HCT116 (cell line): ENCODE measurements at regions of chr10 and their contacts with region 1.

Region 1: GRCh38 chr10:99395750-99396445 is 34.5 kb downstream of the GOT1 start:
- DNase-seq: no peak
- ATAC-seq: peak; percentile 41; the same call in 1 of the 2 replicates
- H3K4me3 ChIP-seq: no peak overlapping the region
- H3K27ac ChIP-seq: peak overlapping the region; percentile 26; the same call in 1 of the 2 replicates
- H3K4me1 ChIP-seq: peaks cover 15 to 31% of the 10 kb centered on the region in 2 experiments; a peak in 3 of 4 replicates
- H3K27me3 ChIP-seq: no peaks in the 10 kb centered on the region
- CTCF ChIP-seq: no peak
- POLR2A ChIP-seq: no peak
- RAD21 ChIP-seq: no peak

Region 2: DNA sequence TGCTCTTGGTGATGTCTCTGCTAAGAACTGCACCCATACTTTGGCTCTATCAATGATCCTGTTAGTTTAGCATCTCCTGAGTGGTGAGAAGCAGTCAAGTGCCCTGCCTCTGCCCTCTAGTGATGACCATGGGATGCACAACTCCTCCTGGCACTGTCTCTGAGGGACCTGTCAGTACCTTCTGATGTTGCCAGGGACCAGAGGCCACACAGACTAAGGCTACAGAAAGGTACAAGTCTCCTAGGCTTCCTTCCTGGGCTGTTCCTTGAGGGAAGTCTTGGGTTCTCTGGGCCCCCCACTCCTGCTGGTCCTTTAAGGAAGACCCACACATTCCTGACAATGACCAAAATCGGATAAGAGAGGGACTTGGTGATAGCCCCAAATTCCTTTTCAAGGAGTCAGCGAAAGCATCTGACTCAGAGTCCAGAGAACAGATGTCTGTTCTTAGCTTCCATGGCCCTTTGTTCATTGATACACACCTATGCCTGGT is 152.2 kb after region 1 on chr10:
- CTCF ChIA-PET with region 1: interaction called, 4 read pairs
- POLR2A ChIA-PET with region 1: no interaction called
- RAD21 ChIA-PET with region 1: no interaction called
- intact Hi-C with region 1: loop called (anchors 1 kb)
- DNase-seq: peak; percentile 50
- ATAC-seq: peak; percentile 98
- H3K4me3 ChIP-seq: no peak overlapping the region
- H3K27ac ChIP-seq: no peak overlapping the region
- H3K4me1 ChIP-seq: peaks cover 0 to 10% of the 10 kb centered on the region in 2 experiments; a peak in 1 of 4 replicates
- H3K27me3 ChIP-seq: peaks cover 26% of the 10 kb centered on the region; the same call in 1 of the 2 replicates
- CTCF ChIP-seq: peak; percentile 71 to 84 (median 81)
- POLR2A ChIP-seq: no peak
- RAD21 ChIP-seq: peak; percentile 71

Region 3: GRCh38 chr10:99595770-99596465 is 200.0 kb after region 1 on chr10:
- CTCF ChIA-PET with region 1: no interaction called
- POLR2A ChIA-PET with region 1: no interaction called
- RAD21 ChIA-PET with region 1: no interaction called
- intact Hi-C with region 1: loop called (anchors 5 kb)
- DNase-seq: no peak
- ATAC-seq: peak; percentile 71
- H3K4me3 ChIP-seq: no peak overlapping the region
- H3K27ac ChIP-seq: no peak overlapping the region
- H3K4me1 ChIP-seq: peaks cover 21 to 39% of the 10 kb centered on the region in 2 experiments
- H3K27me3 ChIP-seq: no peaks in the 10 kb centered on the region
- CTCF ChIP-seq: no peak
- POLR2A ChIP-seq: no peak
- RAD21 ChIP-seq: no peak

Region 4: DNA sequence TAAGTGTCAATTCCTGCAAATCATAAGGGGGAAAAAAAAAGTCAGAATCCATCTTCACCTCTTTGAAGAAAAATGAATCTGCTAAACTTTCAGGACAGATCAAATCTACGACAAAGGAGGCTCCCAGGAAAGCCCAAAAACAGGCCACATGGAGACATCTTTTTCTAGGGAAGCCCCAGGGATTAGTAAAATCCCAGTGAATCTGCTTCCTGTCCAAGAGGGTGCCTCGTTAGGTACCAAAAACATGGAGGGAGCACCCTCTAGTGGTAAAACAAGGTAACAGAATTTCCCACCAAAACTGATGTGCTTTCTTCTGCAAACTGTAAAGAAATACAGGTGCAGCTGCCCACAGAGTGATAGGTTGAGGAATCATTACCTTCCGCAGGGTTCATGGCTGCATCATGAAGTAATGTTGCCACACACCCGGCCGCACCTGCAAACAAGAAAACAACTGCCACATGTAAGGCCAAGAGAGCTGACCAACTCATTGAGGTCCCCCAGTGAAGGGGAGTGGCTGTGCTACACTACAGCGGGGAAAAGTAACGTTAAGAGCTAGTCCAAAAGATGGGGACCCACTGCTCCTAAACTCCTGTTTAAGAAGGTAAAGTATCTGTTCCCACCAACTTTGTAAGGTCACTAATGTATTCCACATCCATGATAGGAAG is 216.4 kb after region 1 on chr10:
- CTCF ChIA-PET with region 1: interaction called, 9 read pairs
- POLR2A ChIA-PET with region 1: no interaction called
- RAD21 ChIA-PET with region 1: no interaction called
- intact Hi-C with region 1: loop called (anchors 1 kb)
- DNase-seq: peak; percentile 59
- ATAC-seq: peak; percentile 88
- H3K4me3 ChIP-seq: no peak overlapping the region
- H3K27ac ChIP-seq: no peak overlapping the region
- H3K4me1 ChIP-seq: no peaks in the 10 kb centered on the region
- H3K27me3 ChIP-seq: no peaks in the 10 kb centered on the region
- CTCF ChIP-seq: peak in 2 of 3 experiments; percentile 87 to 97; a peak in 4 of 6 replicates
- POLR2A ChIP-seq: no peak
- RAD21 ChIP-seq: no peak